ENCODE measurements at regions of chr12 and their contacts with region 1.

Region 1: DNA sequence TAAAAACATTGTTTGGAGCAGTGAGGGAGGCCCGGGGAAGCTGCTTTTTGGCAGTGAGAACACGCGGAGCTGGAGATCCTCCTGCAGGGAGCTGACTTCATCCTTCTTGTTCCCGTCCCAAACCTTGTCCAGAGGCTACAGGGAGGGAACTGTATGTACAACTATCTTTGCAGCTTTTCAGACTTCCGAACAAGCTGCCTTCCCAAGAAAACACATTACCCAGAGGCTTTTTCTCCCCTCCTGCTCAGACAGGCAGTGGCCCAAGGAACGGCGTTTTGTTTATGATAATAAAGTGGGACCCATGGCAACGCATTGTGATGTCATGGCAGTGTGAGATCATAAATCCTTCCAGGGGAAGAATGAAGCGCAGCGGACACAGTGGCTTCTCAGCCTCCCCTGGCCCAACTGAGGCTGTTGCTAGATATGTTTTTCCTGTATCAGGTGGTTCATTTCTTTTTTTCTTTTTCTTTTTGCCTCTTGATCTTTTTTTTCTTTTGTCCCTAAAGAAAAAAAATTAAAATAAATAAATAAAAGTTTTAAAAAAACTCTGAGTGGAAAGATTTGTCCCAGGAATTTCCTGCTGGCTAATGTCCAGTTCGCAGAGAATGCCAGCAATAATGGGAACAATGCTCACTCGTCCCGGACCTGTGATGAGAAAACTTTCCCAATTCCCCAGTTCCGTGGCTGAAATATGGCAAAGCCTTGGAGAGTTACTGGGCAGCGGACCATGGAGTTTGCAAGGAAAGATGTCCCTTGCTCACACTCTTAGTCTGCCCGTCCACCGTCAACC is 103.4 kb upstream of the MAP1LC3B2 start:
- DNase-seq: peak; percentile 98
- H3K4me3 ChIP-seq: peak overlapping the region in 2 of 3 experiments; percentile 14 to 15
- H3K27ac ChIP-seq: peak overlapping the region; percentile 96
- H3K4me1 ChIP-seq: peaks cover 17% of the 10 kb centered on the region
- H3K27me3 ChIP-seq: no peaks in the 10 kb centered on the region
- CTCF ChIP-seq: no peak
- POLR2A ChIP-seq: no peak

Region 2: GRCh38 chr12:115998119-115998633 is 457.6 kb before region 1 on chr12:
- CTCF ChIA-PET with region 1: no interaction called
- POLR2A ChIA-PET with region 1: no interaction called
- dilution Hi-C with region 1: no loop called
- intact Hi-C with region 1: loop called (anchors 5 kb)
- DNase-seq: peak; percentile 70
- H3K4me3 ChIP-seq: no peak overlapping the region
- H3K27ac ChIP-seq: peak overlapping the region; percentile 34
- H3K4me1 ChIP-seq: no peaks in the 10 kb centered on the region
- H3K27me3 ChIP-seq: no peaks in the 10 kb centered on the region
- CTCF ChIP-seq: peak; percentile 47 to 52
- POLR2A ChIP-seq: no peak

Region 3: GRCh38 chr12:116142936-116143898 is 312.5 kb before region 1 on chr12:
- CTCF ChIA-PET with region 1: no interaction called
- POLR2A ChIA-PET with region 1: no interaction called
- dilution Hi-C with region 1: no loop called
- intact Hi-C with region 1: loop called (anchors 1 kb)
- DNase-seq: peak; percentile 97
- H3K4me3 ChIP-seq: peak overlapping the region in 1 of 3 experiments; percentile 18
- H3K27ac ChIP-seq: peak overlapping the region; percentile 99
- H3K4me1 ChIP-seq: peaks cover 28% of the 10 kb centered on the region
- H3K27me3 ChIP-seq: no peaks in the 10 kb centered on the region
- CTCF ChIP-seq: no peak
- POLR2A ChIP-seq: peak; percentile 25

Region 4: GRCh38 chr12:116319898-116320621 is 135.7 kb before region 1 on chr12:
- CTCF ChIA-PET with region 1: no interaction called
- POLR2A ChIA-PET with region 1: no interaction called
- dilution Hi-C with region 1: no loop called
- intact Hi-C with region 1: no loop called
- DNase-seq: peak; percentile 72
- H3K4me3 ChIP-seq: no peak overlapping the region
- H3K27ac ChIP-seq: no peak overlapping the region
- H3K4me1 ChIP-seq: peaks cover 8% of the 10 kb centered on the region
- H3K27me3 ChIP-seq: no peaks in the 10 kb centered on the region
- CTCF ChIP-seq: no peak
- POLR2A ChIP-seq: no peak

Region 5: GRCh38 chr12:116346741-116347140 is 109.0 kb before region 1 on chr12:
- CTCF ChIA-PET with region 1: no interaction called
- POLR2A ChIA-PET with region 1: no interaction called
- dilution Hi-C with region 1: no loop called
- intact Hi-C with region 1: loop called (anchors 1 kb)
- DNase-seq: peak; percentile 88
- H3K4me3 ChIP-seq: no peak overlapping the region
- H3K27ac ChIP-seq: no peak overlapping the region
- H3K4me1 ChIP-seq: peaks cover 11% of the 10 kb centered on the region
- H3K27me3 ChIP-seq: no peaks in the 10 kb centered on the region
- CTCF ChIP-seq: no peak
- POLR2A ChIP-seq: no peak

Region 6: GRCh38 chr12:116358893-116359761 is 96.6 kb before region 1 on chr12:
- CTCF ChIA-PET with region 1: no interaction called
- POLR2A ChIA-PET with region 1: no interaction called
- dilution Hi-C with region 1: no loop called
- intact Hi-C with region 1: loop called (anchors 1 kb)
- DNase-seq: peak; percentile 99
- H3K4me3 ChIP-seq: no peak overlapping the region
- H3K27ac ChIP-seq: peak overlapping the region; percentile 68
- H3K4me1 ChIP-seq: peaks cover 18% of the 10 kb centered on the region
- H3K27me3 ChIP-seq: no peaks in the 10 kb centered on the region
- CTCF ChIP-seq: no peak
- POLR2A ChIP-seq: peak; percentile 47

Region 7: GRCh38 chr12:116382686-116383531 is 72.8 kb before region 1 on chr12:
- CTCF ChIA-PET with region 1: no interaction called
- POLR2A ChIA-PET with region 1: interaction called, 3 read pairs
- dilution Hi-C with region 1: no loop called
- intact Hi-C with region 1: loop called (anchors 1 kb)
- DNase-seq: peak; percentile 94
- H3K4me3 ChIP-seq: no peak overlapping the region
- H3K27ac ChIP-seq: peak overlapping the region; percentile 83
- H3K4me1 ChIP-seq: peaks cover 31% of the 10 kb centered on the region
- H3K27me3 ChIP-seq: no peaks in the 10 kb centered on the region
- CTCF ChIP-seq: peak in 1 of 2 donors; percentile 21
- POLR2A ChIP-seq: no peak

Region 8: GRCh38 chr12:116525418-116526001 is 69.8 kb after region 1 on chr12:
- CTCF ChIA-PET with region 1: no interaction called
- POLR2A ChIA-PET with region 1: no interaction called
- dilution Hi-C with region 1: no loop called
- intact Hi-C with region 1: loop called (anchors 1 kb)
- DNase-seq: peak; percentile 74
- H3K4me3 ChIP-seq: no peak overlapping the region
- H3K27ac ChIP-seq: peak overlapping the region; percentile 68
- H3K4me1 ChIP-seq: peaks cover 22% of the 10 kb centered on the region
- H3K27me3 ChIP-seq: no peaks in the 10 kb centered on the region
- CTCF ChIP-seq: no peak
- POLR2A ChIP-seq: no peak

Measured in endothelial cell of umbilical vein (primary cell).